ENCODE measurements at regions of chr3 and their contacts with region 1.

Region 1: GRCh38 chr3:123081718-123082369 is 15.0 kb downstream of the PDIA5 start:
- DNase-seq: no peak
- ATAC-seq: no peak
- H3K4me3 Mint-ChIP-seq: no peak overlapping the region
- H3K27ac Mint-ChIP-seq: no peak overlapping the region
- H3K4me1 Mint-ChIP-seq: peaks cover 55% of the 10 kb centered on the region
- H3K27me3 Mint-ChIP-seq: no peaks in the 10 kb centered on the region
- CTCF ChIP-seq: no peak

Region 2: GRCh38 chr3:123066896-123067688 is 14.8 kb before region 1 on chr3 and contains the start of gene PDIA5:
- CTCF ChIA-PET with region 1: interaction called, 11 read pairs
- POLR2A ChIA-PET with region 1: interaction called, 3 read pairs
- DNase-seq: peak; percentile 94
- ATAC-seq: peak; percentile 85
- H3K4me3 Mint-ChIP-seq: peak within 1 kb of the TSS; percentile 88
- H3K27ac Mint-ChIP-seq: peak within 1 kb of the TSS; percentile 61; the same call in 1 of the 2 replicates
- H3K4me1 Mint-ChIP-seq: peaks cover 40% of the 10 kb centered on the region
- H3K27me3 Mint-ChIP-seq: peaks cover 33% of the 10 kb centered on the region
- CTCF ChIP-seq: no peak
- total RNA-seq, gene PDIA5: 30.5 to 41.5 TPM (median 34.6 TPM) in 3 replicates